HEK293 (cell line): ENCODE measurements at regions of chr2 and their contacts with region 1.

Region 1: DNA sequence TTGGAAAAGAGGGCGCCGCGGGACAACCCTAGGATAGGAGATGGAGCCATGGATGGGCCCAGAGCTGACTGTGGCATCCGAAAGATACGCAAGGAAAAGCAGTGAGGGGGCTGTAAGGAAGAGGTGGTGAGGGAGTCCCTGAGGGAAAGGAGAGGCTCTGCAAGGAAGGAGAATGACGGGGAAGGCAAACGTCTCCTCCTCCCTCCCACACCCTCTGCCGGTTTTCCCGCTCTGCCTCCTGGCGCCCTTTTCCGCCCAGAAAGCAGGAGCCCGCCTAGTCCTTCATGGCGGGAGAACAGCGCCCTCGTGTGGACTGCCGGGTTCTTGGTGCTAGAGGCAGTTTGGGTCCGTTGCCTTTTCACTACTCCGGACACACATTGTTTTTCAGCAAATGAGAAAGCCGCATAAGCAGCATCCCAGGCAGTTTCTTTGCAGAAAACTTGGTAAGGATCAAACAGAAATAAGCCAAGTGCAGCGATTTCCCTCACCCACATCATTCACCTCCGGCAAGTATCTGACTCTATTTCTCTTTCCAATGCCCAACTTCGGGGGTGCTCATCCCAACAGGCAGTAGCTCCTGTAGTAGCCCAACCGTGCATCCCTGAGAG is 200.4 kb downstream of the INO80D start:
- H3K4me3 ChIP-seq: no peak overlapping the region
- H3K27ac ChIP-seq: no peak overlapping the region
- H3K4me1 ChIP-seq: no peaks in the 10 kb centered on the region
- CTCF ChIP-seq: peak; percentile 98

Region 2: GRCh38 chr2:205474741-205475415 is 410.7 kb before region 1 on chr2:
- CTCF ChIA-PET with region 1: no interaction called
- POLR2A ChIA-PET with region 1: no interaction called
- H3K4me3 ChIP-seq: no peak overlapping the region
- H3K27ac ChIP-seq: no peak overlapping the region
- H3K4me1 ChIP-seq: no peaks in the 10 kb centered on the region
- CTCF ChIP-seq: no peak

Region 3: GRCh38 chr2:205665806-205666205 is 219.8 kb before region 1 on chr2:
- CTCF ChIA-PET with region 1: no interaction called
- POLR2A ChIA-PET with region 1: no interaction called
- H3K4me3 ChIP-seq: no peak overlapping the region
- H3K27ac ChIP-seq: no peak overlapping the region
- H3K4me1 ChIP-seq: no peaks in the 10 kb centered on the region
- CTCF ChIP-seq: no peak

Region 4: DNA sequence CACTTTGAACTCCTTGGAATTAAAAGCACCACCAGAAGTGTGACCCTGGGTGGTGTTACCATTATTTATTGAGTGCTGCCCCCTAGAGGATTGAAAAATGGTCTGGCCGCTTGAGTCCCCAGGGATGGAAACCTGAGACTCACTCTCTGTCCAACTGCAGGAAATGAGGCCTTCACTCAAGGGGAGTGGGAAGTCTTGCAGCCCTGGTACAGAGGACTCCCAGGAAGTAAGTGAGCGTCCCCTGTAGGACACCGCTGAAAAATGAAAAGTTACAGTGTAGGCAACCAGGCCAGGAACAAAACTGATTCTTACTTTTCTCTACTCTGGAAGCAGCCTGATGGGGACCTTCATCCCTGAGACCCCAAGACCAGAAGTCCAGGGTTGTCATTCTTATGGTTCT is 205.5 kb before region 1 on chr2:
- CTCF ChIA-PET with region 1: interaction called, 10 read pairs
- POLR2A ChIA-PET with region 1: no interaction called
- H3K4me3 ChIP-seq: no peak overlapping the region
- H3K27ac ChIP-seq: no peak overlapping the region; the same call in 1 of the 2 replicates
- H3K4me1 ChIP-seq: peaks cover 22% of the 10 kb centered on the region
- CTCF ChIP-seq: peak; percentile 83

Region 5: DNA sequence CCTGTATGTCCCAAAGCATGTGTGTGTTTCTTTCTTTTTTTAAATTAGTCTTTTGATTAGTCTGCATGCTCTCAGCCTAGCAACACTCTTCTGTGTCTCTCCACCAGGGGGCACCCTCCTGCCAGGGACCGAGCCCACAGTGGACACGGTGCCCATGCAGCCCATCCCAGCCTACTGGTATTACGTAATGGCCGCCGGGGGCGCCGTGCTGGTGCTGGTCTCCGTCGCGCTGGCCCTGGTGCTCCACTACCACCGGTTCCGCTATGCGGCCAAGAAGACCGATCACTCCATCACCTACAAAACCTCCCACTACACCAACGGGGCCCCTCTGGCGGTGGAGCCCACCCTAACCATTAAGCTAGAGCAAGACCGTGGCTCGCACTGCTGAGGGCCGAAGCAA is 109.5 kb before region 1 on chr2:
- CTCF ChIA-PET with region 1: interaction called, 59 read pairs
- POLR2A ChIA-PET with region 1: no interaction called
- H3K4me3 ChIP-seq: no peak overlapping the region
- H3K27ac ChIP-seq: no peak overlapping the region
- H3K4me1 ChIP-seq: peaks cover 3% of the 10 kb centered on the region; the same call in 1 of the 2 replicates
- CTCF ChIP-seq: peak; percentile 64

Region 6: GRCh38 chr2:205868773-205869333 is 16.7 kb before region 1 on chr2:
- CTCF ChIA-PET with region 1: interaction called, 10 read pairs
- POLR2A ChIA-PET with region 1: no interaction called
- H3K4me3 ChIP-seq: no peak overlapping the region
- H3K27ac ChIP-seq: no peak overlapping the region
- H3K4me1 ChIP-seq: peaks cover 7% of the 10 kb centered on the region
- CTCF ChIP-seq: no peak